ENCODE measurements at regions of chr3 and their contacts with region 1.

Region 1: DNA sequence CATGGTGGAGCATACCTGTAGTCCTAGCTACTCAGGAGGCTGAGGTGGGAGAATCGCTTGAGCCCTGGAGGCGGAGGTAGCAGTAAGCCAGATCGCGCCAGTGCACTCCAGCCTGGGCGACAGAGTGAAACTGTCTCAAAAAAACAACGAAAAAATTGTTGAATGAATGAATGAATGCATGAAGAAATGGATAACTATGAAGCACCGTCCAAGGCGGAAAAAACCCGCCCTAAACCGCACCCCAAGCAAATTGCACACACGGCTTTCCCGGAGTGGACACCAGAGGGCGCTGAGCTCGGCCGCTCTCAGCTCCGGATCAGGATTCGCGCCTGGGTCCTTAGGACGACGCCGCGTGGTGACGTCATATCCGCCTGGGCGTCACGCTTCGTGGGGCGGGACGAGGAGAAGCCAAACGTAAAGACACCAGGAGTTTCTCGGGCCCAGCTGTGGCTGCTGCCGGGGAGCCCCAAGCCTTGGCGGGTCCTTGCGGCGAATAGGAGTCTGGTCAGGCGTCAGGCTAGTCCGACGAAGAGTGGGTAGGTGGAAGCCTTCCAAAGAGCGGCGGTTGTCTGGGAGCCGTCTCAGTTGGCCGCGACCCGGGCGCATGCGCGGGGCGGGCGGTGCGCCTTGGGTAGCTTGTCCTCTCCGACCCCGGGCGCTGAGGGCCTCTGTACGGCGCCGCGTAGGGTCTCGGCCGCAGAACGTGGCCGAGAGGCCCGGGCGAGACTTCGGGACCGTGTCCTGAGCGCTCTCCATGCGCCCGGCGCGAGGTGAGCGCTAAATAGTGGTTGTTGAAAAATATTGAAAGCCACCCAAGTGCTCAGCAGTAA is at the starts of genes HTD2 and RPP14:
- DNase-seq: peak; percentile 97
- ATAC-seq: peak; percentile 82
- H3K4me3 Mint-ChIP-seq: peak within 1 kb of the TSS; percentile 95
- H3K27ac Mint-ChIP-seq: peak within 1 kb of the TSS; percentile 98
- H3K4me1 Mint-ChIP-seq: peaks cover 11% of the 10 kb centered on the region
- H3K27me3 Mint-ChIP-seq: peaks cover 17% of the 10 kb centered on the region
- CTCF ChIP-seq: peak; percentile 83
- total RNA-seq, gene HTD2: 9.9 to 14.5 TPM (median 11.4 TPM) in 3 replicates
- total RNA-seq, gene RPP14: 16.7 to 17.9 TPM (median 17.0 TPM) in 3 replicates

Region 2: GRCh38 chr3:57942872-57943283 is 363.2 kb before region 1 on chr3:
- CTCF ChIA-PET with region 1: no interaction called
- POLR2A ChIA-PET with region 1: no interaction called
- DNase-seq: no peak
- ATAC-seq: no peak
- H3K4me3 Mint-ChIP-seq: no peak overlapping the region
- H3K27ac Mint-ChIP-seq: no peak overlapping the region
- H3K4me1 Mint-ChIP-seq: peaks cover 15% of the 10 kb centered on the region
- H3K27me3 Mint-ChIP-seq: no peaks in the 10 kb centered on the region; the same call in 1 of the 2 replicates
- CTCF ChIP-seq: no peak

Region 3: GRCh38 chr3:58177747-58178527 is 128.2 kb before region 1 on chr3:
- CTCF ChIA-PET with region 1: interaction called, 76 read pairs
- POLR2A ChIA-PET with region 1: interaction called, 10 read pairs
- DNase-seq: peak; percentile 97
- ATAC-seq: peak; percentile 82
- H3K4me3 Mint-ChIP-seq: peak overlapping the region; percentile 85
- H3K27ac Mint-ChIP-seq: no peak overlapping the region
- H3K4me1 Mint-ChIP-seq: peaks cover 39% of the 10 kb centered on the region
- H3K27me3 Mint-ChIP-seq: peaks cover 15% of the 10 kb centered on the region
- CTCF ChIP-seq: peak; percentile 96

Region 4: GRCh38 chr3:58237238-58237940 is 68.7 kb before region 1 on chr3 and contains the start of gene ABHD6:
- CTCF ChIA-PET with region 1: interaction called, 37 read pairs
- POLR2A ChIA-PET with region 1: interaction called, 3 read pairs
- DNase-seq: peak; percentile 79
- ATAC-seq: peak; percentile 72
- H3K4me3 Mint-ChIP-seq: peak within 1 kb of the TSS; percentile 89
- H3K27ac Mint-ChIP-seq: peak within 1 kb of the TSS; percentile 53; the same call in 1 of the 2 replicates
- H3K4me1 Mint-ChIP-seq: peaks cover 11% of the 10 kb centered on the region
- H3K27me3 Mint-ChIP-seq: peaks cover 58% of the 10 kb centered on the region
- CTCF ChIP-seq: no peak
- total RNA-seq, gene ABHD6: 5.4 to 6.5 TPM (median 6.3 TPM) in 3 replicates

Region 5: DNA sequence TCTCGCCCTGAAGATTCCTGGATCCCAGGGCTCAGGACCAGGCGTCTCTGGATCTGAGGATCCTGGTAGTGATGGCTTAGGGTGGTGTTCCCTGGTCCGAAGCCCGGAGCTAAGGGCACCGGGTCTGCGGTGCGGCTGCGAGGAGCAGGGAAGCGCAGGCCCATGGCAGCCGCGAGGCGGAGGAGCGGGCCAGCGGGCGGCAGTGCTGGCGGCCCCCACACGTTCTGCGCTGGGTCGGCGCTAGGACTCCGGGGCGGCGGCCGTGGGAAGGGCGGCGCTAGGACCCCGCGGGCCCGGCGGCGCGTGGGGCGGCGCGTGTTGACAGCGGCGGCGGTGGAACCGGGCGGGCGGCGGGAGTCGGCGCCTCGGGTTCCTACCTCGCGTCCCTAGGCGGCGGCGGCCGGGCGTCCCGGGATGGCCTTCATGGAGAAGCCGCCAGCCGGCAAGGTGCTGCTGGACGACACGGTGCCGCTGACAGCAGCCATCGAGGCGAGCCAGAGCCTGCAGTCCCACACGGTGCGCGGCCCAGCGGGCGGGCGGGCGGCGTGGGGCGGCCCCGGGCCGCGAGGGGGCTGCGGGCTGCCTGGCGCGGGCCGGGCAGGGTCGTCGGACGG is 26.6 kb after region 1 on chr3 and contains the start of gene PXK:
- CTCF ChIA-PET with region 1: interaction called, 22 read pairs
- POLR2A ChIA-PET with region 1: no interaction called
- DNase-seq: peak; percentile 76
- ATAC-seq: peak; percentile 83
- H3K4me3 Mint-ChIP-seq: peak within 1 kb of the TSS; percentile 90
- H3K27ac Mint-ChIP-seq: no peak within 1 kb of the TSS
- H3K4me1 Mint-ChIP-seq: peaks cover 24% of the 10 kb centered on the region
- H3K27me3 Mint-ChIP-seq: peaks cover 34% of the 10 kb centered on the region
- CTCF ChIP-seq: no peak
- total RNA-seq, gene PXK: 6.6 to 9.4 TPM (median 6.9 TPM) in 3 replicates

Region 6: GRCh38 chr3:58414538-58415197 is 108.6 kb after region 1 on chr3:
- CTCF ChIA-PET with region 1: interaction called, 17 read pairs
- POLR2A ChIA-PET with region 1: no interaction called
- DNase-seq: no peak
- ATAC-seq: peak; percentile 61
- H3K4me3 Mint-ChIP-seq: no peak overlapping the region
- H3K27ac Mint-ChIP-seq: no peak overlapping the region
- H3K4me1 Mint-ChIP-seq: peaks cover 21% of the 10 kb centered on the region
- H3K27me3 Mint-ChIP-seq: no peaks in the 10 kb centered on the region
- CTCF ChIP-seq: peak; percentile 45; the same call in 1 of the 2 replicates

Region 7: GRCh38 chr3:58520403-58521335 is 214.6 kb after region 1 on chr3:
- CTCF ChIA-PET with region 1: interaction called, 14 read pairs
- POLR2A ChIA-PET with region 1: no interaction called
- DNase-seq: no peak
- ATAC-seq: no peak
- H3K4me3 Mint-ChIP-seq: no peak overlapping the region
- H3K27ac Mint-ChIP-seq: no peak overlapping the region
- H3K4me1 Mint-ChIP-seq: peaks cover 49% of the 10 kb centered on the region
- H3K27me3 Mint-ChIP-seq: no peaks in the 10 kb centered on the region; the same call in 1 of the 2 replicates
- CTCF ChIP-seq: no peak

Measured in WTC11 (cell line).